Right ventricle myocardium inferior (tissue), 1 donor: ENCODE measurements at regions of chr2 and their contacts with region 1.

Region 1: DNA sequence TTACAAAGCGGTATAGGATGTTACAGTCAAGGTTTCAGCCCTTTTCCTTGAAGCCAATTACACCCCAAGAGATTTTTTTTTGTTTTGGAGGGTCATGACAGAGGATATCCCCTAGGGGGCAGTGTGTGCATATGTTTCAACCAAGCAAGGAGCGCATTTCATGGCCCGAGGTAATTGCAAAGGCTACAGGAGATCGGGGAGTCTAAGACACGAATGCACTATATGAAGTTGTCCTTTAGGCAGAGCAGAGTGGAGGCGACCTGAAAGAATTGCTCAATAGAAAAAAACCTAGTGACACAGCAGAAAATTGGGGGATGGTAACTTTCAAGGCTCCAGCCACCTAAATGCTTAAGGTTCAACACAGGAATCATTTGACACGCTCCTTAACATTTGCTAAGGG is 219.8 kb upstream of the PARD3B start:
- DNase-seq: no peak
- ATAC-seq: peak; percentile 79

Region 2: DNA sequence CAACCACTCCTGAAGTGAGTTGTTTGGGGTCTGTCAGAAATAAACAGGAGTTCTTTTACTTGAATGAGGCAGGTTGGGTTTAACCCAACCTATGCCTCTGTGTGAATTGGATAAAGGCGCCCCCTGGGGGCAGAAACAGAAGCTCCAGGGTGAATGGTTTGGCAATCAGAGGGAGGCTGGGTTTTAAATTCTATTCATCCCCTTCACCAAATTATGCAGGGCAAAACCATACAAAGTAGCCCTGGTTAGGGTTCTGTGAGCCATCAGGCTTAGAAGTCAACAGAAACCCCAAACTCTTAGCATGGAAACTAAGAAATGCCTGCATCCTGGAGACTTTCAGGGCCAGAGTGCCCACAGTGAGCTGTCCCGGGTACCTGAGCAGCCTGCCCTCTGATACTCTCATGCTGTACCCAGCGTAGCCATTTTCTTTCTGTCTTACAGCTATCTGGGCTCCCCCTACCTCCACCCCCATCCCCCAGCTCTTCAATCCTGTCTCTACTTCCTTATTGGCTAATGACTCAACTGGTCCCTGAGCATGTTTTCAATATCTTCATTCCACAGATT is 147.4 kb before region 1 on chr2:
- intact Hi-C with region 1: no loop called
- DNase-seq: no peak
- ATAC-seq: peak; percentile 56

Region 3: DNA sequence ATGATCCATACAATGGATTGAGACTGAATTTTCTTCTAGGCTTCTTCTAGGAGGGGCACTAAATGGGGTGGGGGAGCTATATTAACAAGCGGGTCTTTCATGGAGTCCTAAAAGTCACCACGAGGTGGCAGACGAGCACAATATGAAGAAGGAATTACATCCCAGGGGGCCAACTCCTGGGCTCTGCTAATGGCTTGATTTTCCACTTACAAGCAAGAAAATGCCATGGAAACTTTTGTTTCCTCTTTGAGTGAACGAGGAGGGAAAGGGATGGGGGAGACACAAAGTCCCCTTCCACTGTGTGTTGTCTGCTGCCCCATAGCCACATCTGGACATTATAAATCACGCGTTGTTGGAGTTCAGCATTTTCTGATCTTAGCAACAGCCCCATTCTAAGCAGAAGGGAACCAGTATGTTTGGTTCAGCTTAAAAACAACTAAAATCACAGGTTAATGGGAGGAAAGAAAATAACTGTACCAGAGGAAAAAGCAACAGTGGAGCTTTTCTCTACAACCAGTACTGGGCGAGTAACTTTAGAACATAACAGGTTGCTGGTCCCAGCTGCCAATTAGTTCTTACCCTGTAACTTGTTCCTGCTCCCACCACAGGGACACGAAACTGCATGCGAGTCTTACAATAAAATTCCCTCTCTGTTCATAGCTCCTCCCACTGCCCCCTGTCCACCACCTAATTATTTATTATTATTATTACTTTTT is 65.1 kb before region 1 on chr2:
- intact Hi-C with region 1: loop called (anchors 5 kb)
- DNase-seq: no peak
- ATAC-seq: peak; percentile 64

Region 4: DNA sequence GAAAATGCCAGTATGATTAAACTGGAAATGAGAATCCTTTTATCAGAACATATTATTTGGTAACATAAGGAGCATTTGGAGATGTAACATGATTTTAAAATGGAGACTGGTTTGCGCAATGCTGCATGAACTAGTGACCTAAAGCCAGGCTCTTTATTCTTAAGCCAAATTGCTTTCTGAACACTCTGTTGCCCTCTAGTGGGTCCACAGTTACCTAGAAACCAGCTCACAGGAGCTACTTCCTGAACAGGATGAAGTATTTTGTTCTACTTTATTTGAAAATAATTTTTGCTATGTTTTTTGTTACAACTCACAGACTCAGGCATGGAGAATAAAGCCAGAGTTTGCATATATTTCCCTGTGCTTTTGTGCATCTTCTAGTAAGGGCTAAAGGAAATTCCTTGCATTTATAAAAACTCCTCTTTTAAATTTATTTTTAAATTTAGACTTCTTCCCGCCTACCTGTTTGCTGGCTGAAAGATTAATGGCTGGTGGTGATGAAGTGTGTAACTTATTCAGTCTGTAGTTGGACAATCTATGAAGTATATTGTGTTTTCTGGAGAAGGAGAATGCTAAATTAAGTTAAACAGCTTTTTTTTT is 366.5 kb after region 1 on chr2:
- intact Hi-C with region 1: loop called (anchors 2 kb)
- DNase-seq: no peak
- ATAC-seq: peak; percentile 70

Region 5: DNA sequence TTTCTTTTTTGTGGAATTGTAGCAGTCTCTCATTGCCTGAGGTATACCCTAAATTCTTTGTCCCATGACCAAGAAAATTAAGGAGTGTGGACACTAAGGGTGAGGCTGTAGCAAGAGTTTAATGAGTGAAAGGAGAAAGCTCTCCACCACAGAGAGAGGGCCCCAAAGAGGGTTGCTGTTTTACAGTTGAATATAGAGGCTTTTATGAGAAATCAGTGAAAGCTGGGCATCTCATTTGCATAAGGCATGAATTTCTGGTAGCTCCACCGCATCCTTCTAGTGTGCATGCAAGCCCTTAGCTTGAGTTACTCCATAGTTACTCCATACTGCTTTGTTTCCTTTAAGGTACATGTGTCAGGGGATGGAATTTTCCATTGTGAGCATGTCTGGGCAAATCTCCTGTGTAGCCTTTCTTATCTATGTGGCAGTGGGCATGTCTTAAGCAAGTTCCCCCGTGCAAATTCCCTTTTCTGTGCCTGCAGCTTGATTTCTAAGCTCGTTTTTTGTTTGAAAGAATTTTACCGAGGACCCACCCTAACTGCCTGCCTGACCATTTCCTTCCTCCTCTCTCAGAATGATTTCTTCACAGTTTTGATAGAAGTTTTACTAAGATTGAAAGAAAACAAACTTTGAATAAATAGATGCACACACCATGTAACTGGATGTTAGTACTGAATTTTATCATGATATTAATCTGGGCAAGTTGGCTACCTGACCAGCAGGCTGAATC is 438.7 kb after region 1 on chr2:
- intact Hi-C with region 1: no loop called
- DNase-seq: no peak
- ATAC-seq: no peak

Region 6: DNA sequence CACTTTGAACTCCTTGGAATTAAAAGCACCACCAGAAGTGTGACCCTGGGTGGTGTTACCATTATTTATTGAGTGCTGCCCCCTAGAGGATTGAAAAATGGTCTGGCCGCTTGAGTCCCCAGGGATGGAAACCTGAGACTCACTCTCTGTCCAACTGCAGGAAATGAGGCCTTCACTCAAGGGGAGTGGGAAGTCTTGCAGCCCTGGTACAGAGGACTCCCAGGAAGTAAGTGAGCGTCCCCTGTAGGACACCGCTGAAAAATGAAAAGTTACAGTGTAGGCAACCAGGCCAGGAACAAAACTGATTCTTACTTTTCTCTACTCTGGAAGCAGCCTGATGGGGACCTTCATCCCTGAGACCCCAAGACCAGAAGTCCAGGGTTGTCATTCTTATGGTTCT is 1354.6 kb after region 1 on chr2:
- intact Hi-C with region 1: loop called (anchors 1 kb)
- DNase-seq: no peak
- ATAC-seq: peak; percentile 20

Region 7: DNA sequence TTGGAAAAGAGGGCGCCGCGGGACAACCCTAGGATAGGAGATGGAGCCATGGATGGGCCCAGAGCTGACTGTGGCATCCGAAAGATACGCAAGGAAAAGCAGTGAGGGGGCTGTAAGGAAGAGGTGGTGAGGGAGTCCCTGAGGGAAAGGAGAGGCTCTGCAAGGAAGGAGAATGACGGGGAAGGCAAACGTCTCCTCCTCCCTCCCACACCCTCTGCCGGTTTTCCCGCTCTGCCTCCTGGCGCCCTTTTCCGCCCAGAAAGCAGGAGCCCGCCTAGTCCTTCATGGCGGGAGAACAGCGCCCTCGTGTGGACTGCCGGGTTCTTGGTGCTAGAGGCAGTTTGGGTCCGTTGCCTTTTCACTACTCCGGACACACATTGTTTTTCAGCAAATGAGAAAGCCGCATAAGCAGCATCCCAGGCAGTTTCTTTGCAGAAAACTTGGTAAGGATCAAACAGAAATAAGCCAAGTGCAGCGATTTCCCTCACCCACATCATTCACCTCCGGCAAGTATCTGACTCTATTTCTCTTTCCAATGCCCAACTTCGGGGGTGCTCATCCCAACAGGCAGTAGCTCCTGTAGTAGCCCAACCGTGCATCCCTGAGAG is 1560.1 kb after region 1 on chr2:
- intact Hi-C with region 1: loop called (anchors 10 kb)
- DNase-seq: peak; percentile 88
- ATAC-seq: peak; percentile 88

Region 8: DNA sequence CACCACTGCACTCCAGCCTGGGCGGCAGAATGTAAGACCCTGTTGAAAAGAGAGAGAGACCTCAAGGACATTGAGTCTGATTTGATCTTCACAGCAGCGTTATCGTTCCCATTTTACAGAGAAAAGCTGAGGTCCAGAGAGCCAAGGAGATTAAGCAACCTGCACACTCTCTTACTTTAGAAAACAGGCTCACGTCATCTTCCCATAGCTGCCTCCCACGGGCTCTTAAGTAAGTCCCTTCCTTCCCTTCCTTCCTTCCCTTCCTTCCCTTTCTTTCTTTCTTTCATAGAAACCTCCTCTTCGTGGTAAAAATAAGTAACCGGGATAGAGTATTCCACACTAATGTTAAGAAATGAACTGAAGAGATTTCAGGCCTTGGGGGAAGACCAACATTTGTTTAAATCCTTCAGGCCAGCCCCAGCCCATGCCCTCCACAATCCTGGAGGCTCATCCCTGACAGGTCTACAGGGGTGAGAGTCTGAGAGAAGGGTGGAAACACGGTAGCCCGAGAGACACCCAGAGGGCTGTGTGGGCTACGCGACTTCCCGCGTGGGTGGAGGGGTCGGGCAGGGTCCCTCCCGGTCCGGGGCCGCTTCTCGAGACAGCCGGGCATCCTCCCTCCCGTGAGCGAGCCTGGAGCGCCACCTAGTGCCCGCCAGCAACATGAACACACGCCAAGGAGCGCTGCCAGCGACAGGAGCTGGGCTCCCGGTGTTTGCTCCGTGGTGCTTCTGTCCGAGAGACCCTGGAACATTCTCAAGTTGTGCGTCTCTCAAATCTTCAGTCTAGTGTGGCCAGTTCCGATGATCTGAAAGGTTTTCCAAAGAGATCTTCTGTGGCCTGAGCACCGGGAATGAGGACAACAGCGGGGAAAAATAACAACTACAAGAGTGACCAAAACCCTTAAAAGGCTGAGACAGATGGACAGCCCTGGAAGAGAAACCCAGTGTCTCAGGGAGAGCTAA is 1600.2 kb after region 1 on chr2:
- intact Hi-C with region 1: loop called (anchors 10 kb)
- DNase-seq: peak; percentile 91
- ATAC-seq: peak; percentile 91